ENCODE measurements at regions of chr1 and their contacts with region 1.

Region 1: GRCh38 chr1:42567043-42567442 is 91.2 kb upstream of the PPIH start:
- DNase-seq: no peak
- H3K4me3 ChIP-seq: no peak overlapping the region
- H3K4me1 ChIP-seq: no peaks in the 10 kb centered on the region
- H3K27me3 ChIP-seq: peaks cover 3% of the 10 kb centered on the region; the same call in 1 of the 2 replicates

Region 2: GRCh38 chr1:42674214-42674613 is 107.2 kb after region 1 on chr1:
- in situ Hi-C with region 1: no loop called
- DNase-seq: no peak
- H3K4me3 ChIP-seq: no peak overlapping the region
- H3K4me1 ChIP-seq: no peaks in the 10 kb centered on the region
- H3K27me3 ChIP-seq: no peaks in the 10 kb centered on the region

Region 3: DNA sequence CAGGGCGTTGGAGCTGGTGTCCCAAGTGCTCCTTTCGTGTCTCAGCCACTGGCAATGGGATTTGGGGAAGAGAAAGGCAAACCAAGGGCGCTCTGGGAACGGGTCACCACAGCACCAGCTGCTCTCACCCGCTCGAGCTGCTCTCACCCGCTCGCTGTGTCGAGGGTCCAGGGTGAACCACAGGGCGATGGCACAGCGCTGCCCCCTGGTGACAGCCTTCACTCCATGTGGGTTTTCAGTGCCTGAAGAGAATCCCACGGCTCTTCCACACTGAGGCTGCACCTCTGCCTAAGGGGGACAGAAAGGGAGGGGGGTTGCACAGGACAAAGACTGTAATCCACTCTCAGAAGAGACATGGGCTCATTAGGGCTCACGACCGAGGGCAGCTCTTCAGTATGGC is 180.1 kb after region 1 on chr1:
- in situ Hi-C with region 1: loop called (anchors 10 kb)
- DNase-seq: peak in 1 of 2 experiments; percentile 71
- H3K4me3 ChIP-seq: no peak overlapping the region
- H3K4me1 ChIP-seq: no peaks in the 10 kb centered on the region
- H3K27me3 ChIP-seq: no peaks in the 10 kb centered on the region

Region 4: GRCh38 chr1:42838482-42839190 is 271.6 kb after region 1 on chr1:
- in situ Hi-C with region 1: no loop called
- DNase-seq: no peak
- H3K4me3 ChIP-seq: no peak overlapping the region
- H3K4me1 ChIP-seq: no peaks in the 10 kb centered on the region
- H3K27me3 ChIP-seq: no peaks in the 10 kb centered on the region